Left cardiac atrium (tissue), 4 donors: ENCODE measurements at regions of chr1 and their contacts with region 1.

Region 1: GRCh38 chr1:171226747-171227370 is 21.4 kb upstream of the FMO1 start:
- DNase-seq: no peak
- ATAC-seq: peak; percentile 78 to 81

Region 2: DNA sequence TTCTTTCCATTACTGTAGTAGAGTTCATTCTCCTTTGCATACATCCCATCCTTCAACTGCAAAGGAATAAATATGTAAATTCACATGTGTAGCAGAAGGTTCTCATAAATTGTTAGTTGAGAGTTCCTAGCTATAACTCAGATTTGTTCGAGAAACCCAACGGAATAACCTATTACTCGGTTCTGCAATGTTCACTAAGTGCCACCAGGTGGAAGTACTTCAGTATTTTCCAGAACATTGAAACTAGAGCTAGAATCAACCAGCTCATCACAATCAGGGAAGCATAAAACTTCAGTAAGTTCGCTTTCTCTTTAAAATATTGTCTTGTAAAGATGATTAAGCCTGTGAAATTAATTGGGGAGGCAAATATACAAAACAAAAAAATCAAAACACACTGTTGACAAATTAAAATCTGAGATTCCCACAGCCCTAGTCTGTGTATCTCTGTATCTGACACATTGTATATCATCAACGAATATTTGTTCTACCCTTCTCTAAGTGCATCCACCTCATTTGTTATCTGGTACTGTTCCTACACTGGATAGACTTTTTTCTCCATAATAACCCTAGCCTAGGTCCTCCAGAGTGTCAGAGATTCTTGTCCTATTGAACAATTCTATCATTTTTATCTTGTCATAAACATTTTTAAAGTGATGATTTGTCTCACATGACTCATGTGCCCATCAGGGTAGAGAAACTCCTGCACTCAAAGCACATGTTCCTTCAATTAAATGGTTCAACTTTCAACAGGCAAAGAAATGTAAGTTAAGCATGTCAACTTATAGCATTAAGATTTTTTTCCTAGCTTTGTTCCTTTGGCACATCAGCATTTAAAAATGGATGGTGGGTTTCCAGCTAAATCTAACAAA is 259.6 kb before region 1 on chr1:
- intact Hi-C with region 1: loop called (anchors 2 to 10 kb)
- DNase-seq: no peak
- ATAC-seq: peak; percentile 69 to 80

Region 3: GRCh38 chr1:171081314-171081753 is 145.5 kb before region 1 on chr1:
- intact Hi-C with region 1: loop called (anchors 2 to 10 kb)
- DNase-seq: no peak
- ATAC-seq: peak; percentile 64 to 73

Region 4: GRCh38 chr1:171110621-171111326 is 116.1 kb before region 1 on chr1:
- intact Hi-C with region 1: loop called in 1 of 2 experiments (anchors 10 kb)
- DNase-seq: no peak
- ATAC-seq: peak in 1 of 2 donors; percentile 61